ENCODE measurements at regions of chr10 and their contacts with region 1.

Region 1: DNA sequence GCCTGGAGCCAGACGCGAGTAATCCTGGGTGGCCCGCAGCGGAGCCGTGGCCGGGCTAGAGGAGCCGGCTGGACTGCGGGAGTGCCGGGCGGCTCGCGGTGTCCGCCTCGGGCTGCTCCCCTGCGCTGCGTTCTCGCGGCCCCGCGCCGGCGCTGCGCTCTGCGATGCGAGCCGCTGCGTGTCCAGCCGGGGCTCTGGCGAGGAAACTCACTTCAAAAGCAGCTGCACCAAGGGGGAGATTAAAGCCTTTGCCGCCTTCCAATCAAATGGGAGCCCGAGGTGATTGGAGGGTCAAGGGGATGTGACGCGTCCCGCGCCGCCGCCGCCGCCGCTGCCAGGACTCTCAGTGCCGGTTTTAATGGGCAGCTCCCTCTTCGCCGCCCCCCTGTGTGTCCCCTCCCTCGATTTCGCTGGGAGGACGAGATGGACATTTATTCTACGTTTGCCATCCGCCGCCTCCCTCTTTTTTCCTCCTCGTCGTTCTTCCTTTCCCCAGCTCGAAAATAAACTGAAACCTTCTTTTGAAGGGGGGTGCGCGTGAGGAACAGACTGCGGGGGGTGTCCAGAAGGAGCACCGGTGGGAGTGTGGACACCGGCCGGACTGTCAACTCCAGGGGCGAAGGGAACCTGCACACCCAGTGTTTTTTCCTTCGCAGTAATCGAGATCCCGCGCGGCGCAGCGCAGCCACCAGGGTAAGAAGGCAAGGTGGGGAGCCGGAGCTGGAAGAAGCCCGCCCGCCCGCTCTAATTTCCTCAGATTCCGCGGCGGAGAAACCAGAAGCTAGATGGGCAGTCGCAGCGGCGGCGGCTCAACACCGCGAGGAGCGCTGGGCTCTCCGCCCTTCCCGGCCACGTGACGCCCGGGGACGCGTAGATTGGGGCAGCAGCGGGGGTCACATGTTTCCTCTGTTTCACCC is at the start of gene ZNF503:
- DNase-seq: peak; percentile 98
- H3K4me3 Mint-ChIP-seq: peak within 1 kb of the TSS; percentile 95
- H3K27ac Mint-ChIP-seq: peak within 1 kb of the TSS; percentile 72
- H3K4me1 Mint-ChIP-seq: peaks cover 17% of the 10 kb centered on the region
- H3K27me3 Mint-ChIP-seq: no peaks in the 10 kb centered on the region
- CTCF ChIP-seq: no peak
- total RNA-seq, gene ZNF503: 12.5 and 12.8 TPM in 2 replicates

Region 2: GRCh38 chr10:75261813-75262708 is 139.8 kb before region 1 on chr10:
- CTCF ChIA-PET with region 1: no interaction called
- intact Hi-C with region 1: loop called (anchors 5 kb)
- DNase-seq: no peak
- H3K4me3 Mint-ChIP-seq: peak overlapping the region; percentile 60
- H3K27ac Mint-ChIP-seq: peak overlapping the region; percentile 80
- H3K4me1 Mint-ChIP-seq: peaks cover 34% of the 10 kb centered on the region
- H3K27me3 Mint-ChIP-seq: no peaks in the 10 kb centered on the region
- CTCF ChIP-seq: no peak

Region 3: GRCh38 chr10:75763652-75764051 is 361.8 kb after region 1 on chr10:
- CTCF ChIA-PET with region 1: no interaction called
- intact Hi-C with region 1: no loop called
- DNase-seq: no peak
- H3K4me3 Mint-ChIP-seq: no peak overlapping the region
- H3K27ac Mint-ChIP-seq: no peak overlapping the region
- H3K4me1 Mint-ChIP-seq: peaks cover 16% of the 10 kb centered on the region
- H3K27me3 Mint-ChIP-seq: no peaks in the 10 kb centered on the region
- CTCF ChIP-seq: no peak

Region 4: DNA sequence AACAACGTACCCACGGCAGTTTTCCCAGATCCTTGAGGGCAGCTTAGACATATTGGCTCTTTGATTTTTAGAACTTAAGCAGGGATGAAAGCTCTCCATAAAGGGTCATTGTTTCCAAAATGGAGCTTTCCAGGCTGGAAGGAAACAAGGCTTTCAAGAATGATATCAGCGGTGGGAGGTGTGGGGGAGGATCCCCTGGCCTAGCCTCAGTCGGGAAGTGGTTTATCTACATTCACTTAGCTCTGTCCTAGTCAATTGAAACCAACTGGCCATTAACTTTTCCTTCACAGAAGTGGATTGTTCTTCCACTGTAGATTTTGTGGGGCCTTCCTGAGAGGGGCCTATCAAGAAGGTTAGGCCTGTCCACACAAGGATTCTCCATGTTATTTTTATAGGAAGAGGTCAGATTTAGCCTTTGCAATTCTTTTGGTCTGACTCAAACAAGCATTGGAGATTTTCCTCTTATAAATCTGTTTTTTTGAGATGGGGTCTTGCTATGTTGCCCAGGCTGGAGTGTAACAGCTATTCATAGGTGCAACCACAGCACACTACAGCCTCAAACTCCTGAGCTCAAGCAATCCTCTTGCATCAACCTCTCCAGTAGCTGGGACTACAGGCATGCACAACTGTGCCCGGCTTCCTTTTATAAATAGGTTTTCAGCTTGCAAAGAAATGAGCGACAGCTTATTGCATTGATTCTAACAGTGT is 373.1 kb after region 1 on chr10:
- CTCF ChIA-PET with region 1: no interaction called
- intact Hi-C with region 1: loop called (anchors 2 kb)
- DNase-seq: no peak
- H3K4me3 Mint-ChIP-seq: no peak overlapping the region
- H3K27ac Mint-ChIP-seq: no peak overlapping the region
- H3K4me1 Mint-ChIP-seq: peaks cover 12% of the 10 kb centered on the region
- H3K27me3 Mint-ChIP-seq: peaks cover 36% of the 10 kb centered on the region
- CTCF ChIP-seq: no peak

Region 5: GRCh38 chr10:75926763-75927162 is 524.9 kb after region 1 on chr10:
- CTCF ChIA-PET with region 1: no interaction called
- intact Hi-C with region 1: loop called (anchors 5 kb)
- DNase-seq: peak; percentile 33
- H3K4me3 Mint-ChIP-seq: no peak overlapping the region
- H3K27ac Mint-ChIP-seq: no peak overlapping the region
- H3K4me1 Mint-ChIP-seq: no peaks in the 10 kb centered on the region
- H3K27me3 Mint-ChIP-seq: peaks cover 59% of the 10 kb centered on the region
- CTCF ChIP-seq: no peak

Region 6: GRCh38 chr10:76086761-76087639 is 685.2 kb after region 1 on chr10:
- CTCF ChIA-PET with region 1: no interaction called
- intact Hi-C with region 1: loop called (anchors 1 kb)
- DNase-seq: peak; percentile 60
- H3K4me3 Mint-ChIP-seq: no peak overlapping the region
- H3K27ac Mint-ChIP-seq: no peak overlapping the region
- H3K4me1 Mint-ChIP-seq: peaks cover 9% of the 10 kb centered on the region
- H3K27me3 Mint-ChIP-seq: peaks cover 14% of the 10 kb centered on the region
- CTCF ChIP-seq: peak; percentile 58

Region 7: GRCh38 chr10:77111611-77112550 is 1710.1 kb after region 1 on chr10:
- CTCF ChIA-PET with region 1: no interaction called
- intact Hi-C with region 1: loop called (anchors 5 kb)
- DNase-seq: peak; percentile 44
- H3K4me3 Mint-ChIP-seq: no peak overlapping the region
- H3K27ac Mint-ChIP-seq: no peak overlapping the region
- H3K4me1 Mint-ChIP-seq: peaks cover 6% of the 10 kb centered on the region
- H3K27me3 Mint-ChIP-seq: peaks cover 45% of the 10 kb centered on the region
- CTCF ChIP-seq: peak; percentile 80